ENCODE measurements at regions of chr9 and their contacts with region 1.

Region 1: GRCh38 chr9:19184144-19184917 is 46.2 kb upstream of the DENND4C start:
- DNase-seq: peak; percentile 91
- H3K4me3 Mint-ChIP-seq: peak overlapping the region; percentile 68
- H3K27ac Mint-ChIP-seq: peak overlapping the region; percentile 87
- H3K4me1 Mint-ChIP-seq: peaks cover 28% of the 10 kb centered on the region
- H3K27me3 Mint-ChIP-seq: no peaks in the 10 kb centered on the region

Region 2: GRCh38 chr9:18238254-18238653 is 946.1 kb before region 1 on chr9:
- CTCF ChIA-PET with region 1: no interaction called
- POLR2A ChIA-PET with region 1: no interaction called
- intact Hi-C with region 1: no loop called
- DNase-seq: no peak
- H3K4me3 Mint-ChIP-seq: no peak overlapping the region
- H3K27ac Mint-ChIP-seq: no peak overlapping the region
- H3K4me1 Mint-ChIP-seq: peaks cover 2% of the 10 kb centered on the region
- H3K27me3 Mint-ChIP-seq: peaks cover 2% of the 10 kb centered on the region

Region 3: GRCh38 chr9:18976709-18977531 is 207.4 kb before region 1 on chr9:
- CTCF ChIA-PET with region 1: no interaction called
- POLR2A ChIA-PET with region 1: no interaction called
- intact Hi-C with region 1: no loop called
- DNase-seq: no peak
- H3K4me3 Mint-ChIP-seq: no peak overlapping the region
- H3K27ac Mint-ChIP-seq: no peak overlapping the region
- H3K4me1 Mint-ChIP-seq: peaks cover 2% of the 10 kb centered on the region
- H3K27me3 Mint-ChIP-seq: peaks cover 5% of the 10 kb centered on the region

Region 4: GRCh38 chr9:19127881-19128500 is 56.3 kb before region 1 on chr9:
- CTCF ChIA-PET with region 1: no interaction called
- POLR2A ChIA-PET with region 1: no interaction called
- intact Hi-C with region 1: loop called (anchors 1 kb)
- DNase-seq: peak; percentile 48
- H3K4me3 Mint-ChIP-seq: peak overlapping the region; percentile 93
- H3K27ac Mint-ChIP-seq: peak overlapping the region; percentile 97
- H3K4me1 Mint-ChIP-seq: peaks cover 56% of the 10 kb centered on the region
- H3K27me3 Mint-ChIP-seq: no peaks in the 10 kb centered on the region

Region 5: GRCh38 chr9:19148170-19148569 is 36.2 kb before region 1 on chr9:
- CTCF ChIA-PET with region 1: no interaction called
- POLR2A ChIA-PET with region 1: no interaction called
- intact Hi-C with region 1: no loop called
- DNase-seq: no peak
- H3K4me3 Mint-ChIP-seq: no peak overlapping the region
- H3K27ac Mint-ChIP-seq: no peak overlapping the region
- H3K4me1 Mint-ChIP-seq: no peaks in the 10 kb centered on the region
- H3K27me3 Mint-ChIP-seq: no peaks in the 10 kb centered on the region

Region 6: DNA sequence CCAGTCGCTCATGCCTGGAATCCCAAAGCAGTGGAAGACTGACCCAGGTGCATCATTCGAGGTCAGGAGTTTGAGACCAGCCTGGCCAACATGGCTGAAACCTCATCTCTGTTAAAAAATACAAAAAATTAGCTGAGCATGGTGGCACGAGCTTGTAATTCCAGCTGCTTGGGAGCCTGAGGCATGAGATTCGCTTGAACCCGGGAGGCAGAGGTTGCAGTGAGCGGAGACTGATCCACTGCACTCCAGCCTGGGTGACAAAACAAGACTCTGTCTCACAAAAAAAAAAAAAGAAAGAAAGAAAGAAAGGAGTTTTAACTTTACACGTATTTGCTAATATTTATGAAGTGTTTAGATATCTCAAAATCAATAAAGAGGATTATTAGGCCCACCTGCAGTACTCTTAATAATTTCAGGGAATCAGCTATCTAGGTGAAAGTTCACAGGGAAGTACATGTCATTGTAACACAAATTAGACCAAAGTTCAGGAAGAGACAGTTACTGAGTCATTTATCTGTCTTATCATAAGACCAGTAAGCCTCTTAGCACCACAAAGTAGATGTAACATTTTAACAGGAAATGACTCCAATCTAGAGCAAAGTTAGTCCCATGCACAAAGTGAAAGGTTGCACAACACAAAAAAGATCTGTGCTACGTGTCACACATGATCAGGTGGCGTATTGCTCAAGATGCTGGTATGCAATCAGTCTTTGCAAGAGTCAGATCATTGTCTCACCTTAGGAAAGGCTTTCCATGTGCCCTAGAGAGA is 22.9 kb before region 1 on chr9:
- CTCF ChIA-PET with region 1: no interaction called
- POLR2A ChIA-PET with region 1: no interaction called
- intact Hi-C with region 1: loop called (anchors 1 kb)
- DNase-seq: peak; percentile 73
- H3K4me3 Mint-ChIP-seq: peak overlapping the region; percentile 14
- H3K27ac Mint-ChIP-seq: peak overlapping the region; percentile 76
- H3K4me1 Mint-ChIP-seq: peaks cover 19% of the 10 kb centered on the region
- H3K27me3 Mint-ChIP-seq: no peaks in the 10 kb centered on the region

Region 7: DNA sequence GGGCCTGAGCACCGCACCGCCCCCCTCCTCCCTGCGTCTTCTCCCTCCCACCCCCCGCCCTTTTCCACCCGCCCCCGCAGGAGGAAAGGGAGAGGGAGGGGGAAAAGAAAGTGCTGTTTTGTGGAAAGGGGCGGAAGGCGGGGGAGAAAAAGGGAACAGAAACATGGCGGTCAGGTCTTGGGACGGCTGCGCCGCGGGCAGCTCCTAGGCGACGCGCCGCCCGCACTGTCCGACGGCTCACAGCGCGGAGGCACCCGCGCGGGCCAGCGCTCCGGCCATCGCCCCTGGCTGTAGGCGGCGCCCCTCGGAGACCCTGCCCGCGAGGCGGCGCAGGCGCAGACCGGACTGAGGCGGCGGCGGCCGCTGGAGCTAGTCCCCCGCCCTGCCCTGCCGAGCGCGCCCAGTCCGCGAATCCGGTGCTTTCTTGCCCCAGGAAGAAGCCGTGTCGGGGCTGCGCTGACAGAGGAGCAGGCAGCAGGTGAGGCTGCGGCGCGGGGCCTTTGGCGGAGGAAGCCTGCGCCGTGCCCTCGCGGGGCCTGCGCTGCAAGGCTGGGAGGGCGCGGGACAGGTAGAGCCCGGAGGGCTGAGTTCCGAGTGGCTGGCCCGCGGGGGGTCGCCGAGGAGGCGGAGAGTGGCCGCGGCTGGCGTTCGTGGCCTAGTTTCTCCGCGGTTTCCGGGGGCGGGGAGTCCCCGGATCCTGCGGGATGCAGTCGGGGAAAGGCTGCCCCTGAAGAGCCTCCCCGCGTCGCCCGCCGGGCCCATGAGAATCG is 46.2 kb after region 1 on chr9 and contains the start of gene DENND4C:
- CTCF ChIA-PET with region 1: interaction called, 12 read pairs
- POLR2A ChIA-PET with region 1: interaction called, 5 read pairs
- intact Hi-C with region 1: loop called (anchors 1 kb)
- DNase-seq: peak; percentile 83
- H3K4me3 Mint-ChIP-seq: no peak within 1 kb of the TSS
- H3K27ac Mint-ChIP-seq: peak within 1 kb of the TSS; percentile 62
- H3K4me1 Mint-ChIP-seq: peaks cover 10% of the 10 kb centered on the region
- H3K27me3 Mint-ChIP-seq: no peaks in the 10 kb centered on the region
- total RNA-seq, gene DENND4C: 17.8 to 20.2 TPM

Region 8: DNA sequence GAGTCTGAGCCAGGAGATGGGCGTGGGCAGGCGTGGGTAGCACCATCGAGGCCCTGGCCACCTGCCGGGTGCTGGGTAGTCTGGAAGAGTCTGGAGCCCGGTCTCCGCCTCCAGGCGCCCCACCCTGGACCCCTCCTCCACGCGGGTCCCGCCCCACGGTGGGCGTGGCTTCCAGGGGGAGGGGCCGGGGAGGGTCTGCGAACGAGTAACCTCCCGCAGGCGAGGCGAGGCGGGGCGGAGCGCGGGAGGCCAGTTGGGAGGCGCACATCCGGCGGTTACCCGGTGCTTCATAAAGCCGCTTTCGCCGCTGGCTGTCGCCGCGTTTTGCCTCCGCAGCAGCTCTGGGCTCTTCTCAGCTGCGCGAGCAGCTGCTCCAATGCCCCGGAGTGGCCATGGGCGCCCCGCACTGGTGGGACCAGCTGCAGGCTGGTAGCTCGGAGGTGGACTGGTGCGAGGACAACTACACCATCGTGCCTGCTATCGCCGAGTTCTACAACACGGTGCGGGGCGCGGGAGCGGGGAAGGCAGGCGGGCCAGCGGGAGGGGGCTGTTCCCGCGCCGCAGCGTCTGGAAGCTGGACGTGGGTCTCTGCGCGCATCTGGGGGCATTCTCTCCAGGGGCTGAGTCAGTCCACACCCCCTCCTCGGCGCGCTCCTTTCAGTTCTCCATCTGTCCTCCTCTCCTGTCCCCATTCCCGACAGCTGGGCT is 224.5 kb after region 1 on chr9 and contains the start of gene ACER2:
- CTCF ChIA-PET with region 1: no interaction called
- POLR2A ChIA-PET with region 1: no interaction called
- intact Hi-C with region 1: loop called (anchors 1 kb)
- DNase-seq: peak; percentile 96
- H3K4me3 Mint-ChIP-seq: peak within 1 kb of the TSS; percentile 95
- H3K27ac Mint-ChIP-seq: peak within 1 kb of the TSS; percentile 71
- H3K4me1 Mint-ChIP-seq: peaks cover 12% of the 10 kb centered on the region
- H3K27me3 Mint-ChIP-seq: no peaks in the 10 kb centered on the region
- total RNA-seq, gene ACER2: 1.8 TPM

Measured in activated CD4-positive, alpha-beta memory T cell treated with anti-CD3 and anti-CD28 coated beads for 36 hours (primary cell).